ENCODE measurements at regions of chr10 and their contacts with region 1.

Region 1: GRCh38 chr10:77494756-77495541 is 142.7 kb downstream of the KCNMA1 start:
- DNase-seq: no peak
- H3K4me3 ChIP-seq: no peak overlapping the region
- H3K27ac ChIP-seq: no peak overlapping the region
- H3K4me1 ChIP-seq: no peaks in the 10 kb centered on the region
- H3K27me3 ChIP-seq: no peaks in the 10 kb centered on the region
- CTCF ChIP-seq: no peak
- POLR2A ChIP-seq: no peak

Region 2: GRCh38 chr10:77518910-77519274 is 23.9 kb after region 1 on chr10:
- intact Hi-C with region 1: loop called (anchors 1 kb)
- DNase-seq: no peak
- H3K4me3 ChIP-seq: no peak overlapping the region
- H3K27ac ChIP-seq: no peak overlapping the region
- H3K4me1 ChIP-seq: no peaks in the 10 kb centered on the region
- H3K27me3 ChIP-seq: no peaks in the 10 kb centered on the region
- CTCF ChIP-seq: no peak
- POLR2A ChIP-seq: no peak